Activated CD8-positive, alpha-beta T cell treated with anti-CD3 and anti-CD28 coated beads, Interleukin-2, amount 10 ng/mL, durations not matched to agents 7 days and 5 days (primary cell): ENCODE measurements at regions of chr22 and their contacts with region 1.

Region 1: DNA sequence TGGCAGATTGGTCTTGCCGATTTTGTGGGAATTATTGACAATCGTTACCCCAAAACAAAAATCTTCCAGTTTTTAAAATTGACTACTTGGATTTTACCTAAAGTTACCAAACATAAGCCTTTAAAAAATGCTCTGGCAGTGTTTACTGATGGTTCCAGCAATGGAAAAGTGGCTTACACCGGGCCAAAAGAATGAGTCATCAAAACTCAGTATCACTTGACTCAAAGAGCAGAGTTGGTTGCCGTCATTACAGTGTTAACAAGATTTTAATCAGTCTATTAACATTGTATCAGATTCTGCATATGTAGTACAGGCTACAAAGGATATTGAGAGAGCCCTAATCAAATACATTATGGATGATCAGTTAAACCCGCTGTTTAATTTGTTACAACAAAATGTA is 37.2 kb downstream of the IGLL1 start:
- DNase-seq: no peak
- ATAC-seq: no peak
- H3K4me3 Mint-ChIP-seq: no peak overlapping the region
- H3K27ac Mint-ChIP-seq: no peak overlapping the region
- H3K4me1 Mint-ChIP-seq: peaks cover 8% of the 10 kb centered on the region
- H3K27me3 Mint-ChIP-seq: peaks cover 15% of the 10 kb centered on the region

Region 2: GRCh38 chr22:23527971-23528740 is 14.8 kb before region 1 on chr22:
- CTCF ChIA-PET with region 1: no interaction called
- POLR2A ChIA-PET with region 1: no interaction called
- DNase-seq: no peak
- ATAC-seq: no peak
- H3K4me3 Mint-ChIP-seq: no peak overlapping the region
- H3K27ac Mint-ChIP-seq: no peak overlapping the region
- H3K4me1 Mint-ChIP-seq: peaks cover under 1% of the 10 kb centered on the region
- H3K27me3 Mint-ChIP-seq: peaks cover 10% of the 10 kb centered on the region

Region 3: DNA sequence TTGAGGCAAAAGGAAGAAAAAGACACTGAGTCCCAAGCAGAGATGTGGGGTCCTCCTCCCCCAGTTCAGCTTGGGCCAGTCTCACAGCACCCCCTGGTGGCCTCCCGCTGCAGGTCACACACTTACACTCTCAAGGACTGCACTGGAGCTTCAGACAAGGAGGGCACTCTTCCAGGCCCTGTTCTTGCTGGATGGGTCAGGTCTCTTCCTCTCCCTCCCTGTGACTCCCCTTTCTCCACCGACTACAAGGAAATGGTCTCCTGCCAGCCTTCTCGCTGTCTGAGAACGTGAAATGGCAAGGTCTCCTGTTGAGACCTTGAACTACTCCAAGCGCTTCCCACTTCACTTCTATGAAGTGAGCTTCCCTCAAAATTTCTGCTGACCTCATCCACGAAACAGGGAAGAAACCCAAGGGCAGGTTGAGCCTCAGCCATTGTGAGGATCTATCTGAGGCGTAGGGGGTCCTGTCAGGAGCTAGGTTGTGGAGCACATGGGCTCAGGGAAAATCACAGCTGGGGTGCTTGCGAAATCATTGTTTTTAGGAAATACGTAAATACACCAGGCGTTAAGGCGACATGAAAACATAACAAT is 48.4 kb after region 1 on chr22:
- CTCF ChIA-PET with region 1: interaction called, 10 read pairs
- POLR2A ChIA-PET with region 1: no interaction called
- DNase-seq: peak; percentile 71
- ATAC-seq: peak; percentile 82
- H3K4me3 Mint-ChIP-seq: no peak overlapping the region
- H3K27ac Mint-ChIP-seq: no peak overlapping the region
- H3K4me1 Mint-ChIP-seq: peaks cover 9% of the 10 kb centered on the region
- H3K27me3 Mint-ChIP-seq: peaks cover 15% of the 10 kb centered on the region